Activated CD4-positive, alpha-beta memory T cell treated with anti-CD3 and anti-CD28 coated beads, Interleukin-2, amount 10 ng/mL, durations not matched to agents 7 days and 5 days (primary cell): ENCODE measurements at regions of chr15 and their contacts with region 1.

Region 1: DNA sequence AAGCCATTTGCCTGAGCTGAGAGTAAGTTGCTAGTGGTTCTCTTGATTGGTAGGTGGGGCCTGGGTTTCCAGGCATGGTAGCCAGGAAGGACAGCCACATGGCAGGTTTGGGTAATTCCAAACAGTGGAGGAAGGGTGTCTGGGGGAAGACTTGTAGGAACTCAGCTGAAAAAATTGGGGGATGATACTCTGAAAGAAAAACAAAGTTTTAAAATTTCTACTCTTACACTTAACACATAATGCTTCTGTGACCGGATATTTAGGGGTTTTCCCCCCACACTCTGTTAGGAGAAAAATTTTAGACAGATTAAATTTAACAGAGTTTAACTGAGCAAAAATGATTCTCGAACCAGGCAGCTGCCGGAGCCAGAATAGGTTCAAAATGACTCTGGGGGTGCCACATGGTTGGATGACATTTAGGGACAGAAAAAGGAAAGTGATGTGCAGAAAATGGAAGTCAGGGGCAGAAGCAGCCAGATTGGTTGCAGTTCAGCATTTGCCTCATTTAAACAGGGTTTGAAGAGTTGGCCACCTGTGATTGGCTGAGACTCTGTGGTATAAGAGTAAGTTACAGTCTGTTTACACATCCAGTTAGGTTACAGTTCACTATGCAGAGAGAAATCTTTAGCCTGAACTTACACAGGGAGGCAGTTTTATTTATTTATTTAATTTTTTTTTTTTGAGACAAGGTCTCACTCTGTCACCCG is 8.1 kb downstream of the B2M start:
- DNase-seq: peak; percentile 67
- H3K4me3 Mint-ChIP-seq: peak overlapping the region; percentile 40
- H3K27ac Mint-ChIP-seq: peak overlapping the region; percentile 91
- H3K4me1 Mint-ChIP-seq: peaks cover 90% of the 10 kb centered on the region
- H3K27me3 Mint-ChIP-seq: no peaks in the 10 kb centered on the region

Region 2: GRCh38 chr15:44222478-44222877 is 497.0 kb before region 1 on chr15:
- CTCF ChIA-PET with region 1: no interaction called
- POLR2A ChIA-PET with region 1: no interaction called
- DNase-seq: no peak
- H3K4me3 Mint-ChIP-seq: no peak overlapping the region
- H3K27ac Mint-ChIP-seq: no peak overlapping the region
- H3K4me1 Mint-ChIP-seq: no peaks in the 10 kb centered on the region
- H3K27me3 Mint-ChIP-seq: peaks cover 26% of the 10 kb centered on the region

Region 3: GRCh38 chr15:44545913-44546802 is 173.3 kb before region 1 on chr15:
- CTCF ChIA-PET with region 1: no interaction called
- POLR2A ChIA-PET with region 1: no interaction called
- DNase-seq: peak; percentile 64
- H3K4me3 Mint-ChIP-seq: peak overlapping the region; percentile 72
- H3K27ac Mint-ChIP-seq: peak overlapping the region; percentile 97
- H3K4me1 Mint-ChIP-seq: peaks cover 55% of the 10 kb centered on the region
- H3K27me3 Mint-ChIP-seq: no peaks in the 10 kb centered on the region

Region 4: GRCh38 chr15:44598892-44599291 is 120.6 kb before region 1 on chr15:
- CTCF ChIA-PET with region 1: interaction called, 8 read pairs
- POLR2A ChIA-PET with region 1: interaction called, 49 read pairs
- DNase-seq: no peak
- H3K4me3 Mint-ChIP-seq: no peak overlapping the region
- H3K27ac Mint-ChIP-seq: peak overlapping the region; percentile 77
- H3K4me1 Mint-ChIP-seq: peaks cover 38% of the 10 kb centered on the region
- H3K27me3 Mint-ChIP-seq: no peaks in the 10 kb centered on the region